ENCODE measurements at regions of chr1 and their contacts with region 1.

Region 1: DNA sequence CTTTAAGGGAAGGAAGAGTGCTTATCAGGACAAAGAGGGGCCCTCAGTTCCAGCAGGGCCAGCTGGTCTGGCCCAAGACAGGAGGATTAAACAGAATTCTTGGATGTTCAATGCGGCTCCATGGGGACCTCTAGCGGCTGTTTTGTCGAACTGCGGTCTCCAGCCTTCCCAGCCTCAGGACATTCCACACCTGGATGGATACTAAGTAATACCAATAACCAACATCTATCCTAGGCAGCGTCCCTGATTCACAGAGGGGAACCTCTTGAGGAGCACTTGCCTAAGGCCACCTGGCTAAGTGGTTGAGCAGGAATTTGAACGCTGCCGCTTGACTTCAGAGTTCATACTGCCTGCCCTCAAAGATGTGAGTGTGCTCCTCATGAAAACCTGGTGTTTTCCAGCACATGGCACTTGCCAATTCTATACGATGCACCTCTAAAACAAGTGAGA is 15.5 kb upstream of the CD247 start:
- DNase-seq: peak; percentile 68
- H3K4me3 ChIP-seq: no peak overlapping the region
- H3K27ac ChIP-seq: no peak overlapping the region
- H3K4me1 ChIP-seq: peaks cover 21% of the 10 kb centered on the region
- H3K27me3 ChIP-seq: no peaks in the 10 kb centered on the region
- CTCF ChIP-seq: peak; percentile 87 to 90

Region 2: DNA sequence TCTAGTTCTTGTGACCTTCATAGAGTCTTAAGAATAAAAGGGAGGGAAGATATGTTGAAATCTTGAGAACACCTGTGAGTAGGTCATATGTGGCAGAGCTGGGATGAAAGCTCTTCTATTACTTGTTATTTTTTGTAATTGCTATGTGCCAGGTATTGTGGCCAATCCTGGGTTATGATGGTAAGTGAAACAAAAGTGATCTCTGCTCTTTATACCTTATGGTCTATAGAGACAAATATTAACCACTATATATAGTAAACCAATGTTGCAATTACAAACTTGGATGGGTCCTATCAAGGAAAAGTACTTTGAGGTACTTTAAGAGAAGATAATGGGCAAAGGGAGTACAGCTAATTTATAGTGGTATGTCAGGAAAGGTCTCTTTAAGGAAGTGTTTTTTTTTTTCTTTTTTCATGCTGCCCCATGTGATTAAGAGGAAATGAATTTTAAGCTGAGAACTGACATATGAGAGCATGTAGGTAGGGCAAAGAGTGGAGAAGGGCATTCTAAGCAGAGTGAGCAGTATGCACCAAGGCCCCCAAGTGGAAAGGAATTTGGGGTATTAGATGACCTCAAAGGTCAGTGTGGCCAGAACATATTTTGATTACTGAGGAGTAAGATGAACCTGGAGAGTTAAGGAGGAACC is 269.9 kb before region 1 on chr1:
- CTCF ChIA-PET with region 1: no interaction called
- dilution Hi-C with region 1: no loop called
- in situ Hi-C with region 1: no loop called
- intact Hi-C with region 1: loop called (anchors 2 kb)
- DNase-seq: no peak
- H3K4me3 ChIP-seq: no peak overlapping the region
- H3K27ac ChIP-seq: no peak overlapping the region
- H3K4me1 ChIP-seq: no peaks in the 10 kb centered on the region
- H3K27me3 ChIP-seq: no peaks in the 10 kb centered on the region
- CTCF ChIP-seq: no peak

Region 3: DNA sequence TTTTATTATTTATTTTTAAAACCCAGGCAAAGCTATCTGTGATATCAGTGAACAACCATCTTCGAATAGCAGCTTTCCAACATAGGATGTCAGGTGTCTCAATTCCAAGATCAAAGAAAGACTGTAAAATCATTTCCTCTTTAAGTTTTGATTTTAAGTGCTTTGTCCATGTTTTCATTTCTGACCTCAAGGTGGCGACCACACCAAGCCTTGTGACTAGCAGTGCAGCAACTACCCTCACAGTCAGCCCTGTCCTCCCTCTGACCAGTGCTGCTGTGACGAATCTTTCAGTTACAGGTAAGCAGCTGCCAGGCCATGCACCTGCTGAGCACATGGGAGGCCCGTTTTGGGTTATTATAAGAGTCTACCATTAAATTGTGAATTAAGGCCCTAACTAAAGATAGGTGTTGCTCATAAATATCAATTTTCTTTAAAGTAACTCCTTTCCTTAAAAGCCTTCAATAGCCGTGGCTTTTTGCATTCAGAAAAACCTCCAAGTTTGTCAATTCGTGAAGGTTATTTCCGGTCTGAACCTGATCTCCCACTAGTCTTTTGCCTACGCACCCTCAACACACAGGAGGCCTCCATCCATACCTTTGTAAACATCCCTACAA is 132.5 kb before region 1 on chr1:
- CTCF ChIA-PET with region 1: no interaction called
- dilution Hi-C with region 1: no loop called
- in situ Hi-C with region 1: no loop called
- intact Hi-C with region 1: loop called (anchors 1 kb)
- DNase-seq: peak; percentile 57
- H3K4me3 ChIP-seq: no peak overlapping the region
- H3K27ac ChIP-seq: no peak overlapping the region
- H3K4me1 ChIP-seq: peaks cover 3% of the 10 kb centered on the region
- H3K27me3 ChIP-seq: no peaks in the 10 kb centered on the region
- CTCF ChIP-seq: peak; percentile 39 to 64

Region 4: DNA sequence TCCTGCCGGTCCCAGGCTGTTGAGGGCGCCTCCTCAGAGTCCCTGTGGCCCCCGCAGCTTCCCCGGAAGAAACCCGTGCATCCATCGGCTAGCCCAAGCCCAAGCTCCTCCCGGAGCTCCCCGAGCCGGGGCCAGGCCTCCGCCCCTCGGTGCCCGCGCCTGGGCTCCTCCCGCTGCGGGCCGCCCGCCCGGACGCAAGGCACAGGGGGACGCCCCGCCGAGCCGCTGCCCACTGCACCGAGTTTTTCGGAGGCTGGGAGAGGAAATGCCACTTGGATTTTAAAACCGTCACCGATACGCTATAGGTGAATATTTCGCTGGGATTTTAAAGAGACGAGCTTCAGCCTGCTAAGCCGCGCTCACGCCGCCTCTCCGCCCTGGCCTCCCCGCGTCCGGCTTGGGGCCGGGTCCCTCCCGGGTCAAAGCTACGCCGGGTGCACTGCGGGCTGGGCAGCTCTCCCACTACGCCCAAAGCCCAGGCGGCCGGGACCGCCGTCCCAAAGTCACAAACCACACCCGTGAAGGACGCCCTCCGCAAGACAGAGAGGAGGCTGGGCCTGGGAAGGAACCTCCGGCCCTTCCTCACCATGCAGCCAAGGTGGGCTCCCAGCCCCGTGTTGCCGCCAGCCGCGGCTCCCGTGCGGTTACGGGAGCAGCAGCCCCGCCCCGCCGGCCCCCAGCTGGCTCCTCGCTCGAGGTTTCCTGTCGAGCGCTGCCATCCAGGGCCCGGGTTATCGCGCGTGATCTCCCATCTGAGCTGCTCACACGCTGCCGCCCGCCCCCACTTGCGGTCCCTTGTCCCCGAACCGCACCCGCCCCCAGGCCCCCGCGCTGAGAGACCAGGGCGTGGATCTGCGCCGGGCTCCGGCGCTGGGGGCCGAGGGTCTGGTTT is 78.7 kb before region 1 on chr1:
- CTCF ChIA-PET with region 1: no interaction called
- dilution Hi-C with region 1: no loop called
- in situ Hi-C with region 1: no loop called
- intact Hi-C with region 1: loop called (anchors 5 kb)
- DNase-seq: peak; percentile 26
- H3K4me3 ChIP-seq: peak overlapping the region; percentile 70 to 87 (median 85)
- H3K27ac ChIP-seq: no peak overlapping the region
- H3K4me1 ChIP-seq: peaks cover 12% of the 10 kb centered on the region
- H3K27me3 ChIP-seq: no peaks in the 10 kb centered on the region
- CTCF ChIP-seq: no peak

Region 5: DNA sequence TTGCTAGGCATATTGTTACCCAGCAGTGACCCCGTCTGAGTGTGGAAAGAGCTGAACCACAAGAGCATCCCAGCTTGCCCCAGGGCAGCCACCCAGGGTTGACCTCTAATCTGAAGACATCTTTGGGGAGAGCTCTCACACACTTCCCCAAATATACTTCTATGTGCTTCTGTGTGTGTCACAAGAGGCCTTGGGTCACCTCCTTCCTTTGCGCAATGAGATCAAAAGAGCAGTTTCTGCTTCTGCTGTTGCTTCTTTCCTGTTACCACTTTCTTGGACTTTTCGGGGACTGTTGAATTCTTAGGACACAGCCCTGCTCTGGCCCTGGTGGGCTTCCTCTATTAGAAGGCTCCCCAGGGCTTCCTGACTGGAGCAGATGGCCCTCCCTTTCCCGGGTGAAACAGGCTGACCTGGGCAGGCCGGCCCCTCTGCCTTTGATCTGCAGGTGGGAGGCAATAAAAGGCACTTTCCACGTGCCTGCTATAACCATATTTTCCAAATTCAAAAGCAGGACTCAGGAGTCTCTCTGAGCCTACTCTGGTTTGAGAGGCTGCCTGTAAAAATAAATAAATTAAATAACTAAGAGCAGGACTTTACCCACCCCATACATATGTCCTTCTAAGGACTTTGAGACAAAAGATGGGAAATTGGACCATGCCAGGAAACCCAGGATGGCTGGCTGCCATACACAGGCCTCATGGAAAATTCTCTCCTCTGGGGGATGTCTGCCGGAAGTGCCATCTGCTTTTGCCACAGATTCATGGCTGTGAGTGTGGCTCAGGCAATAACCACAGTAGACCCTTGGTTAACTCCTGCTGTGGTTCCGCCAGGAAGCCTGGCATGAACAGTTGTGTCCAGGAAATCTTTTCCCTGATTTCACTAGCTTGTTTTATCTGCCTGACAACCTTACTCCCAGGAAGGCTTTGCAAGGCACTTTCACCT is 67.8 kb after region 1 on chr1:
- CTCF ChIA-PET with region 1: no interaction called
- dilution Hi-C with region 1: no loop called
- in situ Hi-C with region 1: no loop called
- intact Hi-C with region 1: no loop called
- DNase-seq: peak; percentile 25
- H3K4me3 ChIP-seq: no peak overlapping the region
- H3K27ac ChIP-seq: no peak overlapping the region
- H3K4me1 ChIP-seq: peaks cover 18% of the 10 kb centered on the region
- H3K27me3 ChIP-seq: no peaks in the 10 kb centered on the region
- CTCF ChIP-seq: no peak